ENCODE measurements at regions of chr17 and their contacts with region 1.

Region 1: GRCh38 chr17:68435876-68436842 is 21.1 kb downstream of the WIPI1 start:
- DNase-seq: peak; percentile 80
- H3K4me3 ChIP-seq: no peak overlapping the region
- H3K27ac ChIP-seq: peak overlapping the region in 1 of 2 experiments; percentile 39; a peak in 1 of 4 replicates
- H3K4me1 ChIP-seq: peaks cover 0 to 10% of the 10 kb centered on the region in 2 experiments; a peak in 2 of 4 replicates
- H3K27me3 ChIP-seq: no peaks in the 10 kb centered on the region
- CTCF ChIP-seq: peak; percentile 100
- EP300 ChIP-seq: 0 out of 4 replicates have a peak, but pooled peaks of 1 of the 2 experiments have one; percentile 21
- RAD21 ChIP-seq: peak; percentile 89

Region 2: DNA sequence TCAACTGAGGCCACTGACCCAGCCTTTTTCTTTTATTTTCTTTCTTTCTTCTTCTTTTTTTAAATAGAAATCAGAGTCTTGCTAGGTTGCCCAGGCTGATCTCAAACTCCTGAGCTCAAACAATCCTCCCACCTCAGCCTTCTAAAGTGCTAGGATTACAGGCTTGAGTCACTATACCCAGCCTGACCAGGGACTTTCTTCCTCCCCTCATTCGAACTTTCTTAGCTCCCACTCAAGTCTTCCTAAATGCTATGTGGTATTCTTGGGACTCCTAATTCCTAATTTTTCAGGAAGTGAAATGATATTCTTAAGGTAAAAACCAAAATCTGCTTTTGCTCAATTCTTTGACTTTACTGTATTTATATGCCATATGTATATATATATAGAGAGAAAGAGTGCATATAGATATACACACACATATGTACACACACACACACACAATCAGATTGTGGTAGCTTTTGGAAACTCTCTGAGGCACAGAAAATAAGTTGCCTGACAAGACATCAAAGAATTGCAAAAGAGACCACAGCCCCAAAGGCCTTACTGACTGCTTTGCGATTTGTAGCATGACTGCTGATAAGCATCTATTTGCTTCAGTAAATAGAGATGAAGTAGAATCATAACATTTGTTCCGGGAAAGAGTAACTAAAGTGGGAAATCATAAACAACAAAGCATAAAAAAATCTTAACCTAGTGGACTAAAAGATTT is 197.8 kb before region 1 on chr17:
- CTCF ChIA-PET with region 1: no interaction called
- POLR2A ChIA-PET with region 1: no interaction called
- DNase-seq: no peak
- H3K4me3 ChIP-seq: no peak overlapping the region
- H3K27ac ChIP-seq: no peak overlapping the region
- H3K4me1 ChIP-seq: peaks cover 0 to 2% of the 10 kb centered on the region in 2 experiments; a peak in 1 of 4 replicates
- H3K27me3 ChIP-seq: no peaks in the 10 kb centered on the region
- CTCF ChIP-seq: no peak
- EP300 ChIP-seq: no peak
- RAD21 ChIP-seq: no peak

Region 3: GRCh38 chr17:68260051-68260762 is 176.0 kb before region 1 on chr17:
- CTCF ChIA-PET with region 1: interaction called, 77 read pairs
- POLR2A ChIA-PET with region 1: no interaction called
- DNase-seq: no peak
- H3K4me3 ChIP-seq: no peak overlapping the region
- H3K27ac ChIP-seq: no peak overlapping the region
- H3K4me1 ChIP-seq: no peaks in the 10 kb centered on the region
- H3K27me3 ChIP-seq: no peaks in the 10 kb centered on the region
- CTCF ChIP-seq: no peak
- EP300 ChIP-seq: no peak
- RAD21 ChIP-seq: no peak

Region 4: DNA sequence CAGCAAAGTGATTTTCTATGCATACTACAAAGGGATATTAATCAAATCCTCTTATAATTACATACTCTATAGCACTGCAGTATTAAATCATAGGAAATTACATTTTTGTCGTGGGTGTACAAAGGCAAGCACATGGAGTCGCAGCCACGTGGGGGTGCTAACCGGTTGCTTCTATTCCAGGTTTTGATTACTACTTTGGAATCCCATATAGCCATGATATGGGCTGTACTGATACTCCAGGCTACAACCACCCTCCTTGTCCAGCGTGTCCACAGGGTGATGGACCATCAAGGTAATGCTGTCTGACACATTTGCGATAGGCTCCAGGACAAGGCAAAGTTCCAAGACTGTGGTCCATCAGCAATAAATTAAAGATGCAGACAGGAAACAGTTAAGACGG is 84.8 kb before region 1 on chr17:
- CTCF ChIA-PET with region 1: interaction called, 10 read pairs
- POLR2A ChIA-PET with region 1: no interaction called
- DNase-seq: peak; percentile 77
- H3K4me3 ChIP-seq: no peak overlapping the region
- H3K27ac ChIP-seq: no peak overlapping the region
- H3K4me1 ChIP-seq: peaks cover 5 to 12% of the 10 kb centered on the region in 2 experiments; a peak in 3 of 4 replicates
- H3K27me3 ChIP-seq: no peaks in the 10 kb centered on the region
- CTCF ChIP-seq: peak; percentile 55
- EP300 ChIP-seq: no peak
- RAD21 ChIP-seq: peak; percentile 63

Region 5: DNA sequence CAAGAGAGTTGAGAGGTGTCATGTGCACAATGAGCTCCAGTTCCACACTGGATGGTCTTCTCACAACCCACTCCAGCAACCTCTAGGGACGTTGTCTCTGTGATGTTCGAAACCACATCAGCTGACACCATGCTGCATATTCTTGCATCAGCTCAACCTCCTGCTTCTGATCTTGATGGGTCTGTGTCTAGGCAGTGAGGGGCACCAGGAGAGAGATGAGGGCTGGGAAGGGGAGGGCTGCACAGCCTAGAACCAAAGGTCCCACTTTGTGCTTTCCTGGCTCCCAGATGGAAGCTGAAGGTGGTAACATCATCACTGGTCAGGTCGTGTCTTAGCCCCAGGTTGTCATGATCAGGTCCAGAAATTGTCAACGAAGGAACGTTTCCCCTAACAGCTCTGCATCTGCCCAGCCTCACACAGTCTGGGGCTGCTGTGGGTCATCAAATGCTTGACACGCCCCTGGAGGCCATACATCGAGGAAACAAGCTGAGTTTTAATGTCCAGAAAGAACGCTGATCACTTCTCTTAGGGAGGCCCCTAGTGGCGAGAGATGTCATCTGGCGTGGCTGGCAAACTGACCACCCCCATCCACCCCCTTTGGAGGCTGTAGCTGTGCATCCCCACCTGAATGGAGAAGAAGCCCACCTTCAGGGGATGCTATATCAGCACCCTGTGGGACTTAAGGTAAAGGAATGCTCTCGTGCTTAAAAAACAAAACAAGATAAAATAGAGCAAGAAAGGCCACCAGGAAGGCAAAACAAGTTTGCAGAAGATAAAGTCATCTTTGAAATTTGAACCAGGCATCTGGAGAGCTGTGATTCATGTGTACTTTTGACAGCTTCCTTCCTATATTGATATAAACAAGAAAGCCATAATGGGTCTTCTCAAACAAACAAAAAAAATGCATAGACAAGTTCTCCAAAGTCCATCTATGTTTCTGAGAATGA is 37.2 kb before region 1 on chr17:
- CTCF ChIA-PET with region 1: interaction called, 34 read pairs
- POLR2A ChIA-PET with region 1: no interaction called
- DNase-seq: peak; percentile 86
- H3K4me3 ChIP-seq: no peak overlapping the region; a peak in 1 of 4 replicates
- H3K27ac ChIP-seq: no peak overlapping the region
- H3K4me1 ChIP-seq: peaks cover 3 to 5% of the 10 kb centered on the region in 2 experiments; a peak in 2 of 4 replicates
- H3K27me3 ChIP-seq: no peaks in the 10 kb centered on the region
- CTCF ChIP-seq: peak; percentile 87
- EP300 ChIP-seq: no peak
- RAD21 ChIP-seq: peak; percentile 79

Region 6: DNA sequence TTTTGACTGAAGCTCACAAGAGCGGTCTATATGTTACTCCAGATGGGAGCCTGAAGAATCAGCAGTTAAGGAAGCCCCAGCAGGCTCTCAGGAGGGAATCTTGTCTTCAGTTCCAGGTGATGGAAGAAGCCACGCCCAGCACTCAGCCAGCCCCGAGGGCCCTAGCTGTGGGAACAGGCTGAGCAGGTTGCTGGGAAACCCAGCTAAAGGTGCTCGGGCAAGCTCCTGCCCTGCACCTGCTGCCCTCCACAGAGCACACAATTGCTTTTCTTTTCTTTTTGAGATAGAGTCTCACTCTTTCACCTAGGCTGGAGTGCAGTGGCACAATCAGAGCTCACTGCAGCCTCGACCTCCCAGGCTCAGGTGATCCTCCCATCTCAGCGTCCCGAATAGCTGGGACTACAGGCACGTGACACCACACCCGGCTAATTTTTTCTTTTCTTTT is 11.2 kb before region 1 on chr17:
- CTCF ChIA-PET with region 1: interaction called, 35 read pairs
- POLR2A ChIA-PET with region 1: no interaction called
- DNase-seq: no peak
- H3K4me3 ChIP-seq: no peak overlapping the region
- H3K27ac ChIP-seq: no peak overlapping the region
- H3K4me1 ChIP-seq: no peaks in the 10 kb centered on the region
- H3K27me3 ChIP-seq: no peaks in the 10 kb centered on the region
- CTCF ChIP-seq: no peak
- EP300 ChIP-seq: no peak
- RAD21 ChIP-seq: no peak

Region 7: GRCh38 chr17:68457539-68458259 is 21.5 kb after region 1 on chr17:
- CTCF ChIA-PET with region 1: interaction called, 63 read pairs
- POLR2A ChIA-PET with region 1: no interaction called
- DNase-seq: peak; percentile 100
- H3K4me3 ChIP-seq: peak overlapping the region; percentile 77 to 93
- H3K27ac ChIP-seq: peak overlapping the region in 1 of 2 experiments; percentile 18; a peak in 1 of 4 replicates
- H3K4me1 ChIP-seq: peaks cover 8 to 23% of the 10 kb centered on the region in 2 experiments; a peak in 3 of 4 replicates
- H3K27me3 ChIP-seq: no peaks in the 10 kb centered on the region
- CTCF ChIP-seq: no peak
- EP300 ChIP-seq: no peak
- RAD21 ChIP-seq: no peak

Region 8: GRCh38 chr17:68909066-68909465 is 472.9 kb after region 1 on chr17:
- CTCF ChIA-PET with region 1: no interaction called
- POLR2A ChIA-PET with region 1: no interaction called
- DNase-seq: no peak
- H3K4me3 ChIP-seq: no peak overlapping the region
- H3K27ac ChIP-seq: peak overlapping the region; percentile 55 to 69; a peak in 3 of 4 replicates
- H3K4me1 ChIP-seq: peaks cover 5 to 12% of the 10 kb centered on the region in 2 experiments; a peak in 3 of 4 replicates
- H3K27me3 ChIP-seq: no peaks in the 10 kb centered on the region
- CTCF ChIP-seq: no peak
- EP300 ChIP-seq: peak in 1 of 2 experiments; percentile 25; a peak in 1 of 4 replicates
- RAD21 ChIP-seq: no peak

Measured in SK-N-SH (cell line).